K562 (cell line): ENCODE measurements at regions of chr5 and their contacts with region 1.

Region 1: GRCh38 chr5:16456103-16456832 is 9.3 kb downstream of the ZNF622 start:
- DNase-seq: peak; percentile 48 to 81 (median 54)
- ATAC-seq: peak; percentile 88
- H3K4me3 ChIP-seq: no peak overlapping the region
- H3K27ac ChIP-seq: peak overlapping the region; percentile 51; the same call in 1 of the 3 replicates
- H3K4me1 ChIP-seq: peaks cover 0 to 16% of the 10 kb centered on the region in 2 experiments; a peak in 2 of 5 replicates
- H3K27me3 ChIP-seq: no peaks in the 10 kb centered on the region
- CTCF ChIP-seq: peak; percentile 58 to 81 (median 76)
- EP300 ChIP-seq: no peak
- POLR2A ChIP-seq: no peak
- RAD21 ChIP-seq: peak; percentile 69 to 84

Region 2: DNA sequence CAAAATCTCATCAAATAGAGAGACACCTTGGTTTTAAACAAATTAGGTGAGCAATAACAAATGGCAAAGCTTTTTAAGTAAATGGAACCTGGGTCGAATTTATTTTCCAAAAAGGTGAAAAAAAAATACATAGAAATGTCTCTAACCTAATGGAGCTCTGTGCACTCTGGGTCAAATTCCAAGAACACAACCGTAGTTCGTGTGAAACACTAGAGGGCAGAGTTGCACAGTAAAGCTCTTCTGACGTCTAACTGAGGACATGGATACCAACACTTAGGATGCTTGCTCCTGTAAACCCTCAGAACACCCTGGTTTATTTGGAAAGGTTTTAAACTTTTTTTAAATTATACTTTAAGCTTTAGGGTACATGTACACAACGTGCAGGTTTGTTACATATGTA is 295.6 kb before region 1 on chr5:
- CTCF ChIA-PET with region 1: no interaction called
- POLR2A ChIA-PET with region 1: no interaction called
- in situ Hi-C with region 1: loop called (anchors 10 kb)
- intact Hi-C with region 1: loop called (anchors 2 kb)
- DNase-seq: peak; percentile 55 to 72 (median 60)
- ATAC-seq: peak; percentile 97
- H3K4me3 ChIP-seq: no peak overlapping the region
- H3K27ac ChIP-seq: no peak overlapping the region
- H3K4me1 ChIP-seq: no peaks in the 10 kb centered on the region
- H3K27me3 ChIP-seq: no peaks in the 10 kb centered on the region
- CTCF ChIP-seq: peak; percentile 62 to 72 (median 64)
- EP300 ChIP-seq: no peak
- POLR2A ChIP-seq: no peak
- RAD21 ChIP-seq: peak; percentile 45 to 80

Region 3: DNA sequence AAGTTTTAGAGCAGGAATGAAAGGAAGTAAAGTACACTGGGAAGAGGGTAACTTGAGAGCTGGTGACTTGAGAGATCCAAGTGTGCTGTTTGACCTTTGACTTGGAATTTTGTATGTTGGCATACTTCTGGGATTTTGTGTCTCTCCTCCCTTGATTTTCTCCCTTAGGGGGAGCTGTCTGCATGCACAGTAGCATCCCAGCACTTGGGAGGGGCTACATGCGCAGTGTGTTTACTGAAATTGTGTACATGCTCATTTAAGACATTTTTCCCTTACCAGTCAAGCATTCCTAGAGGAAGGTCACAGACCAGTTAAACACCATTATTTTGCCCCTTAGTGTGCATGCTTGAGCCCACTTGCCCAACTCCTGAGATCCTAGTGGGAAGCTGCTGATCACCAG is 110.8 kb before region 1 on chr5:
- CTCF ChIA-PET with region 1: interaction called, 4 read pairs
- POLR2A ChIA-PET with region 1: interaction called, 3 read pairs
- in situ Hi-C with region 1: loop called (anchors 10 kb)
- intact Hi-C with region 1: loop called (anchors 1 kb)
- DNase-seq: peak in 3 of 4 experiments; percentile 18 to 57 (median 45)
- ATAC-seq: peak; percentile 87
- H3K4me3 ChIP-seq: no peak overlapping the region
- H3K27ac ChIP-seq: no peak overlapping the region
- H3K4me1 ChIP-seq: no peaks in the 10 kb centered on the region
- H3K27me3 ChIP-seq: no peaks in the 10 kb centered on the region
- CTCF ChIP-seq: peak; percentile 68 to 77 (median 72)
- EP300 ChIP-seq: no peak
- POLR2A ChIP-seq: no peak
- RAD21 ChIP-seq: peak; percentile 69 to 87

Region 4: GRCh38 chr5:16350816-16351215 is 105.5 kb before region 1 on chr5:
- CTCF ChIA-PET with region 1: interaction called, 4 read pairs
- POLR2A ChIA-PET with region 1: interaction called, 3 read pairs
- in situ Hi-C with region 1: loop called (anchors 10 kb)
- intact Hi-C with region 1: no loop called
- DNase-seq: no peak
- ATAC-seq: no peak
- H3K4me3 ChIP-seq: no peak overlapping the region
- H3K27ac ChIP-seq: no peak overlapping the region
- H3K4me1 ChIP-seq: no peaks in the 10 kb centered on the region
- H3K27me3 ChIP-seq: no peaks in the 10 kb centered on the region
- CTCF ChIP-seq: no peak
- EP300 ChIP-seq: no peak
- POLR2A ChIP-seq: no peak
- RAD21 ChIP-seq: no peak

Region 5: GRCh38 chr5:16539169-16539721 is 83.0 kb after region 1 on chr5:
- CTCF ChIA-PET with region 1: no interaction called
- POLR2A ChIA-PET with region 1: no interaction called
- in situ Hi-C with region 1: no loop called
- intact Hi-C with region 1: no loop called
- DNase-seq: no peak
- ATAC-seq: no peak
- H3K4me3 ChIP-seq: no peak overlapping the region
- H3K27ac ChIP-seq: no peak overlapping the region
- H3K4me1 ChIP-seq: no peaks in the 10 kb centered on the region
- H3K27me3 ChIP-seq: peaks cover 41 to 43% of the 10 kb centered on the region in 2 experiments
- CTCF ChIP-seq: no peak
- EP300 ChIP-seq: no peak
- POLR2A ChIP-seq: no peak
- RAD21 ChIP-seq: no peak

Region 6: GRCh38 chr5:16759147-16759773 is 303.0 kb after region 1 on chr5:
- CTCF ChIA-PET with region 1: no interaction called
- POLR2A ChIA-PET with region 1: no interaction called
- in situ Hi-C with region 1: no loop called
- intact Hi-C with region 1: no loop called
- DNase-seq: no peak
- ATAC-seq: no peak
- H3K4me3 ChIP-seq: no peak overlapping the region
- H3K27ac ChIP-seq: no peak overlapping the region
- H3K4me1 ChIP-seq: no peaks in the 10 kb centered on the region
- H3K27me3 ChIP-seq: peaks cover 3 to 8% of the 10 kb centered on the region in 2 experiments; a peak in 2 of 5 replicates
- CTCF ChIP-seq: no peak
- EP300 ChIP-seq: no peak
- POLR2A ChIP-seq: no peak
- RAD21 ChIP-seq: no peak